Posterior cingulate gyrus (tissue), 11 donors: ENCODE measurements at regions of chr2 and their contacts with region 1.

Region 1: GRCh38 chr2:188524519-188525113 is 232.9 kb downstream of the GULP1 start:
- DNase-seq: peak in 6 of 10 donors; percentile 6 to 79 (median 43)

Region 2: GRCh38 chr2:188478724-188479123 is 45.9 kb before region 1 on chr2:
- intact Hi-C with region 1: no loop called
- DNase-seq: no peak

Region 3: GRCh38 chr2:188607239-188607883 is 82.7 kb after region 1 on chr2:
- intact Hi-C with region 1: no loop called
- DNase-seq: no peak

Region 4: DNA sequence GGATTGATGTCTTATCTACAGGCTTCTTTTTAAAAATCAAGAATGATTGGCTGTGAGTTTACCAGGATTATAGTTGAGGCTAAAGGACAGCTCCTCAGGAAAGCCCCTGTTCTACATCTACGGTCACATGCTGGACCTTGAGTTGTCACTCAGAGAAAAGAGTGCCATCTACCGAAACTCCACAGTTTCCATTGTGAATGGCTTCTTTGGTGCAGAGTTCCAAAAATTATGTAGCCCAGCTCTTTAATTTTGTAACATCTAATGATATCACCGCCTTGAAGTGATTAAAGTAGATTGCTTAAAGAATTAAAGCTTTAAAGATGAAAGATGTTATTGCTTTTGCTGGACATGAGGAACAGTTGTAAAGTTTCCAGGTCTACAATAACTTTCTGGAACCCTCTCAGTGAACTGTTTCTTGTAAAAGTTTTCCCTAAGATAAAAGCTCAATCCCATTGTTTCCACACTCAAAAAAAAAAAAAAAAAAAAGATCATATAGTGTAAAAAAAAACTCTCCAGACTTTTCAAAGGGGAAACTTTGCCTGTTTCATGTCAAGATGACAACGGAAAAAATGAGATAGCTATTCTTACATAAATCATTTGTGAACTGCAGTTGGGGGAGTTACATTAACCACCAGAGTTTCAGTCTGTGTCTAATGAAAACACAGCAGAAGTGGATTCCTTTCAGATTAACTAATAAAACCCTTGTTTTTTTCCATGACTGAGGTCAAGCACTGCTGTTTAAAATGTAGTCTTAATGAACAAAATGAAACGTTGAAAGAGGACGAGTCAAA is 453.9 kb after region 1 on chr2:
- intact Hi-C with region 1: loop called (anchors 10 kb)
- DNase-seq: no peak

Region 5: DNA sequence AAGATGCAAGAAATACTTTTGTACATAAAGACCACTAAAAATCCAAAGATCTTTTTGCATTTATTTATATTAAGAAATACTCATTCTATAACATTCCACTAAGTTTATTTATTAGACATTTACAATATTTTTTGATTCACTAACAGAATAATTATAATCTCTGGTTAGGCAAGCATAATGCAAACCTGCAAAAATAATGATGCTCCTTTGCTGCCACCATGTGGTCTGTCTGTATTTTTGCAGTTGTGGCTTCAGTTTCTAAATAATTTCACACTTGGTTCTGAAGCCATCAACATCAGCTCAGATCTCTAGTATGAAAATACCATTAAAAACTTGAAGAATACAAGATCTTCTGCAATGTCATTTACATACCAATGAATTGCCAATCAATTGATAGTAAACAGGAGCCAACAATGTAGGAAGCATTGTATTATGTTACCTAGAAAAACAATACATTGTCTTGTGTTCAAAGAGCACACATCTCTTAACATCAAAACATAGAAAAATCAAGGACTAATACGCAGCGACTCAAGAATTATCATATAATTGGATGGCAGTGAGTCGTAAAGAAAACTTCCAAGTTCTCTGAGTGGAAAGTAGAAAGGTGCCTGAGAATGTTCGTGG is 887.8 kb after region 1 on chr2:
- intact Hi-C with region 1: loop called (anchors 2 kb)
- DNase-seq: peak in 4 of 10 donors; percentile 20 to 42 (median 30)